ENCODE measurements at regions of chr15 and their contacts with region 1.

Region 1: GRCh38 chr15:69394556-69395282 is 19.4 kb upstream of the KIF23 start:
- DNase-seq: peak; percentile 44 to 86 (median 71)
- ATAC-seq: peak; percentile 97
- H3K4me3 ChIP-seq: no peak overlapping the region
- H3K4me3 Mint-ChIP-seq: no peak overlapping the region
- H3K27ac ChIP-seq: no peak overlapping the region
- H3K27ac Mint-ChIP-seq: peak overlapping the region in 1 of 9 donors; percentile 6
- H3K4me1 ChIP-seq: no peaks in the 10 kb centered on the region
- H3K4me1 Mint-ChIP-seq: peaks cover 6 to 12% (median 7%) of the 10 kb centered on the region in 7 donors
- H3K27me3 ChIP-seq: no peaks in the 10 kb centered on the region
- H3K27me3 Mint-ChIP-seq: peaks cover 0 to 8% (median 0%) of the 10 kb centered on the region in 5 donors

Region 2: GRCh38 chr15:69081310-69082004 is 313.3 kb before region 1 on chr15:
- CTCF ChIA-PET with region 1: no interaction called
- POLR2A ChIA-PET with region 1: no interaction called
- intact Hi-C with region 1: no loop called
- DNase-seq: no peak
- ATAC-seq: no peak
- H3K4me3 ChIP-seq: no peak overlapping the region
- H3K4me3 Mint-ChIP-seq: no peak overlapping the region
- H3K27ac ChIP-seq: no peak overlapping the region
- H3K27ac Mint-ChIP-seq: no peak overlapping the region
- H3K4me1 ChIP-seq: no peaks in the 10 kb centered on the region
- H3K4me1 Mint-ChIP-seq: peaks cover 0 to 4% (median 0%) of the 10 kb centered on the region in 7 donors
- H3K27me3 ChIP-seq: no peaks in the 10 kb centered on the region
- H3K27me3 Mint-ChIP-seq: peaks cover 9 to 29% (median 20%) of the 10 kb centered on the region in 5 donors

Region 3: GRCh38 chr15:69265347-69265955 is 129.3 kb before region 1 on chr15:
- CTCF ChIA-PET with region 1: no interaction called
- POLR2A ChIA-PET with region 1: no interaction called
- intact Hi-C with region 1: loop called in 1 of 2 experiments (anchors 5 kb)
- DNase-seq: peak in 5 of 9 donors; percentile 3 to 7 (median 4)
- ATAC-seq: no peak
- H3K4me3 ChIP-seq: no peak overlapping the region
- H3K4me3 Mint-ChIP-seq: no peak overlapping the region
- H3K27ac ChIP-seq: no peak overlapping the region
- H3K27ac Mint-ChIP-seq: no peak overlapping the region
- H3K4me1 ChIP-seq: no peaks in the 10 kb centered on the region
- H3K4me1 Mint-ChIP-seq: no peaks in the 10 kb centered on the region
- H3K27me3 ChIP-seq: no peaks in the 10 kb centered on the region
- H3K27me3 Mint-ChIP-seq: peaks cover 0 to 3% (median 0%) of the 10 kb centered on the region in 5 donors

Region 4: DNA sequence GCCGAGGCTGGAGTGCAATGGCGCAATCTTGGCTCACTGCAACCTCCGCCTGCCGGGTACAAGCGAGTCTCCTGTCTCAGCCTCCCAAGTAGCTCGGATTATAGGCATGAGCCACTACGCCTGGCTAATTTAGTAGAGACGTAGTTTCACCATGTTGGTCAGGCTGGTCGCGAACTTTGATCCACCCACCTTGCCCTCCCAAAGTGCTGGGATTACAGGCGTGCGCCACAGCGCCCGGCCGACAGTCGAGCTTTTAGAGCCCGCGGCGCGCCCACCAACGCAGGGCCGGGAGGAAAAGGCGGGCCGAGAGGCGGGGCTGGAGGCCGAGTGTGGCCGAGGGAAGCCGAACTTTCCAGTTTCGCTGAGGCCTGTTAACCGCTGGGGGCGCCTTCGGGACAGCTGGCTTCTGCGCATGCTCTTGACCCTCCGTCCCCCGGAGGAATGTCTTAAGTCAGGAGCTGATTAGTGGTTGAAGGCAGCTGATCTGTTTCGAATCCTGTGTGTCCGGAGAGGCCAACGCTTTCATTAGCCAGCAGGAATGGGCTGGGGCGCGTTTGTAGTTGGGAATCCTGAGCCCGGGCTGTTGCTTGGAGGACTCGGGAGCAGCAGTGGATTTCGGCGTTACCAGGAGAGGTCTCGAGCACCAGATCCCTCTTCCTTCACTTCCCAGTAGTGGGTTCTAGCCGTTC is 67.9 kb after region 1 on chr15:
- CTCF ChIA-PET with region 1: interaction called, 3 read pairs
- POLR2A ChIA-PET with region 1: no interaction called
- intact Hi-C with region 1: loop called in 1 of 2 experiments (anchors 1 kb)
- DNase-seq: peak; percentile 84 to 90 (median 89)
- ATAC-seq: peak; percentile 99
- H3K4me3 ChIP-seq: peak overlapping the region; percentile 84
- H3K4me3 Mint-ChIP-seq: peak overlapping the region; percentile 87 to 95 (median 92)
- H3K27ac ChIP-seq: peak overlapping the region; percentile 91
- H3K27ac Mint-ChIP-seq: peak overlapping the region; percentile 79 to 97 (median 91)
- H3K4me1 ChIP-seq: peaks cover 10 to 17% of the 10 kb centered on the region in 2 donors
- H3K4me1 Mint-ChIP-seq: peaks cover 10 to 51% (median 37%) of the 10 kb centered on the region in 7 donors
- H3K27me3 ChIP-seq: no peaks in the 10 kb centered on the region
- H3K27me3 Mint-ChIP-seq: peaks cover 0 to 17% (median 0%) of the 10 kb centered on the region in 5 donors

Measured in naive thymus-derived CD4-positive, alpha-beta T cell (primary cell).